CD8-positive, alpha-beta T cell (primary cell): ENCODE measurements at regions of chr17 and their contacts with region 1.

Region 1: DNA sequence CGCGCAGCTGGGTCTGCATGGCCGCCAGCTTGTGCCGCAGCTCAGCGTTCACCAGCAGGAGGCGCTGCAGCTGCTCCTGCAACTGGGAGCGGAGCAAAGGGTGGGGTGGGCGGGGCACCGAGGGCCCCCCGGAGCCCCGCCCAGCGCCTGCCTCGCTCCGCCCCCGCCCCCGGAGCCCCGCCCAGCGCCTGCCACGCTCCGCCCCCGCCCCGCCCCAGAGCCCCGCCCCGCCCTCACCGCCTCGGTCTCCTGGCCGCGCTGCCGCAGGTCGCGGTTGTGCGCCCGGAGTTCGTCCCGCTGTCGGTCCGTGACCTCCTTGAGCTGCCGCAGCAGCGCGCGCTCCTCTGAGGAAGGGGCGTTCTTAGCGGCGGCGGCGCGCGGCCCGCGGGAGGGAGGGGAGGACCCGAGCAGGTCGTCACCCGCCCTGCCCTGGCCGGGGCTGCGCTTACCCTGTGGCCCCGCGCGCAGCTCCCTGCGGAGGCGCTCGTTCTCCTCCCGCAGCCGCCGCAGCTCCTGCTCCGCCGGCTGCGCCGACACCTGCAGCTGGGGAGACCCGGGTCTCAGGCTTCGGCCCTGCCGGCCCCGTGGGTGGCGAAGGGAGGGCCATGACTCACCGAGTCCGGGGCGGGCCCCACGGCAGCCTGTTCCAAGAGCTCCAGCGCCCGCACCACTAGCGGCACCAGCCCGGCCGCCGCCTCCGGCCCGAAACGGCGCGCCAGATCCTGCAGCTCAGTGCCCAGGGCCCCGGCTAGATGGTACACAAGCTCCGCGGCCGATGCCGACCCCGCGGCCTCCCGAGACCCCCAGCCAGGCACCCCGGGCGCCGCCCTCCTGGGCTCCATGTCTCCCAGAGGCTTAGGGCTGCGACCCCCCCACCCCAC is 463 bp downstream of the RILP start:
- DNase-seq: peak; percentile 90 to 98 (median 93)
- ATAC-seq: peak; percentile 76
- H3K4me3 ChIP-seq: peak overlapping the region; percentile 34 to 70
- H3K4me3 Mint-ChIP-seq: peak overlapping the region; percentile 74
- H3K27ac ChIP-seq: peak overlapping the region in 1 of 2 experiments; percentile 44
- H3K27ac Mint-ChIP-seq: peak overlapping the region; percentile 49
- H3K4me1 ChIP-seq: peaks cover 16% of the 10 kb centered on the region
- H3K4me1 Mint-ChIP-seq: peaks cover 14% of the 10 kb centered on the region
- H3K27me3 ChIP-seq: no peaks in the 10 kb centered on the region
- H3K27me3 Mint-ChIP-seq: no peaks in the 10 kb centered on the region
- CTCF ChIP-seq: peak; percentile 71

Region 2: DNA sequence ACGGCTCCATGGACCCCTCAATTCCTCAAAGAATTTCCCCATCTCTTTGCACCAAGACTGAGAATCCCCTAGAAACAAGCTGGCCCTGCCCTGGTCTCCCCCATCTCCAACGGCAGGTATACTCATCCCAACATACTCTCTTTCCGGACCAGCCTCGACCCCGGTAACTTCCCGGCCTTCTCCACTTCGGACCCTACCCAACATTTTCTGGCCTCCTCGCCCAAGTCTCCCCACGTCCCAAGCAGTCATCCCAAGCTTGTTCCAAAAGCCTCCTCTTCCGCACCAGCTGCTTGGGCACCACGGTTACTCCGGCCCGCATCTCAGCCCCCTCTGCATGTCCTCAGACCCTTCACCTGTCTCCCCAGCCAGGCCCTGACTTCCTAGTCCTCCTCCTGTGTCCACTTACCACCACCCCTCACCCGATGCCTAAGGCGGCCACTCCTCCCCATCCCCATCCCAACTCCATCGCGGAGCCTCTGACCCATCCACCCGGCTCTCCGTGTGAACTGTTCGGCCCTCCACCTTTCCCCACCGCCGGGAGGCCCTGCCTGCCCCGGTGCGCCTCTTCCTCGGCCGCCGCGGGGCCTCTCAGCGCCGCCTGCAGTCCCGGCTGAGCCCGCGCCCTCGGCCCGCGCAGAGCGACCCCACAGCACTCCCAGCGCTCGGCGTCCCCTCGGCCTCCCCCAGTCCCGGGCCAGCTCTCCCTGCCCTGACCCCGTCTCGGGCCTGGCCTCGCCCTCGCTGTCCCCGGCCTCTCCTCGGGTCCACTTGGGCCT is 87.6 kb before region 1 on chr17:
- CTCF ChIA-PET with region 1: no interaction called
- POLR2A ChIA-PET with region 1: no interaction called
- intact Hi-C with region 1: loop called in 1 of 2 experiments (anchors 5 kb)
- DNase-seq: peak in 8 of 9 experiments; percentile 16 to 62 (median 34)
- ATAC-seq: peak; percentile 35
- H3K4me3 ChIP-seq: peak overlapping the region; percentile 40 to 41
- H3K4me3 Mint-ChIP-seq: peak overlapping the region; percentile 83
- H3K27ac ChIP-seq: peak overlapping the region in 1 of 2 experiments; percentile 40
- H3K27ac Mint-ChIP-seq: peak overlapping the region; percentile 66
- H3K4me1 ChIP-seq: peaks cover 19% of the 10 kb centered on the region
- H3K4me1 Mint-ChIP-seq: peaks cover 45% of the 10 kb centered on the region
- H3K27me3 ChIP-seq: no peaks in the 10 kb centered on the region
- H3K27me3 Mint-ChIP-seq: no peaks in the 10 kb centered on the region
- CTCF ChIP-seq: peak; percentile 38

Region 3: GRCh38 chr17:1634830-1635650 is 14.2 kb before region 1 on chr17:
- CTCF ChIA-PET with region 1: interaction called, 13 read pairs
- POLR2A ChIA-PET with region 1: interaction called, 22 read pairs
- intact Hi-C with region 1: no loop called
- DNase-seq: no peak
- ATAC-seq: no peak
- H3K4me3 ChIP-seq: no peak overlapping the region
- H3K4me3 Mint-ChIP-seq: no peak overlapping the region
- H3K27ac ChIP-seq: no peak overlapping the region
- H3K27ac Mint-ChIP-seq: no peak overlapping the region
- H3K4me1 ChIP-seq: no peaks in the 10 kb centered on the region
- H3K4me1 Mint-ChIP-seq: peaks cover 2% of the 10 kb centered on the region
- H3K27me3 ChIP-seq: no peaks in the 10 kb centered on the region
- H3K27me3 Mint-ChIP-seq: no peaks in the 10 kb centered on the region
- CTCF ChIP-seq: no peak

Region 4: DNA sequence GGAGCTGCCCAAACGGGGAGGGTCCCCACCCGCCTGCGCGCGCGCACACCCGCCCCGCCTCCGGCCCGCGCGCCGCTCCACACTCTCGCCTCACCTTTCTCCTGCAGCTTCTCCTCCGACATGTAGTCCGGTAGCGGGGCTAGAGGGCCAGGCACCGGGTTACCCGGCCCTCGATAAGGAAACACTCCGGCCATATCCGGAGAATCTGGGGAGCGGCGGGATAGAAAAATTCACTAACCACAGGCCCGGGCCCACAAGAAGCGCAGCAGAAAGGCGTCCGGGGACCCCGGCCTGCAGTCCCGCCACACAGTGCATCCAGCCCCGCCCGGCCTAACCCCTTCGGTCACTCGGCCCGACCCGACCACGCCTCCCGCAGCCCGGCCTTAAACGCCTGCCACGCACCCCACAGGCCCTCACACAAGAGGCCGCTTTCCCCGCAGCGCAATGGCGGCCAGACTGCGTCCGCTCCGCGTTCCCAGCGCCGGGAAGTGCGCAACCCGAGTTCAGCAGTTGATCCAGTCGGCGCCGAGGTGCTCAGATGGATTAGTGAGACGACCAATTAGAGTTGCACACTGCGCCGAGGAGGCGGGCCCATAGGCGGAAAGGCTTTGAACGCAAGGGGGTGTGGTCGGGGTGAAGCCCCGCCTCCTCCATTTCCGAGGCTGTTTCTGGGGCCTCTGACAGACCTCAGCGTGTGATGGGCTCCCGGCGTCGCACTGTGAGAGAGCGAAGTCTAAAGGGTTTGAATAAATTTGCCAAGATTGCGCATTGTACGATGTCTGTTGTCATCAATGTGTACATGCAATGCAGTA is 35.4 kb after region 1 on chr17 and contains the start of gene PRPF8:
- CTCF ChIA-PET with region 1: interaction called, 3 read pairs
- POLR2A ChIA-PET with region 1: interaction called, 11 read pairs
- intact Hi-C with region 1: loop called (anchors 1 to 2 kb)
- DNase-seq: peak; percentile 97 to 99 (median 98)
- ATAC-seq: peak; percentile 98
- H3K4me3 ChIP-seq: peak within 1 kb of the TSS; percentile 78 to 85
- H3K4me3 Mint-ChIP-seq: peak within 1 kb of the TSS; percentile 98
- H3K27ac ChIP-seq: peak within 1 kb of the TSS; percentile 92 to 95
- H3K27ac Mint-ChIP-seq: peak within 1 kb of the TSS; percentile 99
- H3K4me1 ChIP-seq: peaks cover 22% of the 10 kb centered on the region
- H3K4me1 Mint-ChIP-seq: peaks cover 53% of the 10 kb centered on the region
- H3K27me3 ChIP-seq: no peaks in the 10 kb centered on the region
- H3K27me3 Mint-ChIP-seq: no peaks in the 10 kb centered on the region
- CTCF ChIP-seq: no peak
- total RNA-seq, gene PRPF8: 572 to 611 TPM

Region 5: DNA sequence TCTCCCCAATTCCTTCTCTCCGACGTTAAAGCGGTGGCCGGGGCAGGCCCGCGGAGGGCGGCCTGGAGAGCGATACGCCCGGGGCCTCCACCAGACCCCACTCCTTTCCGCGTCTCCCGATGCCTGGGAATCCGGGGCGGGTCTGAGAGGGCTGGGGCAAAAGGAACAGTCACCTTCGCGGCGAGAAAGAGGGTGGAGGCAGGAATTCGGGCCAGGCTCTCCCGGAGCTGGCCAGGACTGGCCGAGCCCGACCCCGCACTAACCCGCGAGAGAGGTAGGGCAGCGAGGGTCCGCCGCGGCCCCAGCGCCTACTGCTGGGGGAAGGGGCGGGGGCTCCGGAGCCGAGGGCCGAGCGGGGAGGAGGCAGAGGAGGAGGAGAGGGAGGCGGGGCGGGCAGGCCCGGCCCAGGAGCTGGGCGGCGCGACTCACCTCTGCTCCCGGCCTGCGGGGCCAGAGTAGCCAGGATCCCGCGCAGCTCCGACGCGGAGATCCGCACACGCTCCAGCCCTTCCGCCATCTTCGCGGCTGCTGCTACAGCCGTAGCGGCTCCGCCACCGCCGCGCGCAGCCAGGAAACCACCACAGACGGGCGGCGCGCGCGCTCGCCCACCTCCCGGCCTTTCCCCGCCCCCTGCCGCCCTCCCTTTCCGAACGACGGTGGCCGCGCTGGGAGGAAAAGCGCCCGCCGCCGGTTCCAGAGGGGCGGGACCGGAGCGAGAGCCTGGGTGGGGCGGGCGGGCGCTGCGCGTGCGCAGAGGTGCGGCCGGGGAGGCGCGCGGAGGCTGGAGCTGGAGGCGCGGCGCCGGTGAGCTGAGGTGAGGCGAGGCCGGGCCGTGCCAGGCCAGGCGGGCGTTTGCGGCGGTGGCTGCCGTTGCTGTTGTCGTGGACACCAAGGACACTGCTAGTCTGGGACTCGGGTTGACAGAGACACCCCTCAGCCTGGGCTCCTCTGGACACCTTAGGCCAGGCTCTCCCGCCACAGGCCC is 654.3 kb after region 1 on chr17 and contains the starts of genes SMG6 and SRR:
- CTCF ChIA-PET with region 1: no interaction called
- POLR2A ChIA-PET with region 1: no interaction called
- intact Hi-C with region 1: loop called in 1 of 2 experiments (anchors 10 kb)
- DNase-seq: peak; percentile 89 to 98 (median 95)
- ATAC-seq: peak; percentile 91
- H3K4me3 ChIP-seq: peak within 1 kb of the TSS; percentile 95 to 98
- H3K4me3 Mint-ChIP-seq: peak within 1 kb of the TSS; percentile 93
- H3K27ac ChIP-seq: peak within 1 kb of the TSS; percentile 76 to 85
- H3K27ac Mint-ChIP-seq: peak within 1 kb of the TSS; percentile 91
- H3K4me1 ChIP-seq: peaks cover 18% of the 10 kb centered on the region
- H3K4me1 Mint-ChIP-seq: peaks cover 43% of the 10 kb centered on the region
- H3K27me3 ChIP-seq: no peaks in the 10 kb centered on the region
- H3K27me3 Mint-ChIP-seq: no peaks in the 10 kb centered on the region
- CTCF ChIP-seq: no peak
- total RNA-seq, gene SMG6: 36.1 to 37.8 TPM
- total RNA-seq, gene SRR: 1.8 to 2.9 TPM